ENCODE measurements at regions of chr15 and their contacts with region 1.

Region 1: DNA sequence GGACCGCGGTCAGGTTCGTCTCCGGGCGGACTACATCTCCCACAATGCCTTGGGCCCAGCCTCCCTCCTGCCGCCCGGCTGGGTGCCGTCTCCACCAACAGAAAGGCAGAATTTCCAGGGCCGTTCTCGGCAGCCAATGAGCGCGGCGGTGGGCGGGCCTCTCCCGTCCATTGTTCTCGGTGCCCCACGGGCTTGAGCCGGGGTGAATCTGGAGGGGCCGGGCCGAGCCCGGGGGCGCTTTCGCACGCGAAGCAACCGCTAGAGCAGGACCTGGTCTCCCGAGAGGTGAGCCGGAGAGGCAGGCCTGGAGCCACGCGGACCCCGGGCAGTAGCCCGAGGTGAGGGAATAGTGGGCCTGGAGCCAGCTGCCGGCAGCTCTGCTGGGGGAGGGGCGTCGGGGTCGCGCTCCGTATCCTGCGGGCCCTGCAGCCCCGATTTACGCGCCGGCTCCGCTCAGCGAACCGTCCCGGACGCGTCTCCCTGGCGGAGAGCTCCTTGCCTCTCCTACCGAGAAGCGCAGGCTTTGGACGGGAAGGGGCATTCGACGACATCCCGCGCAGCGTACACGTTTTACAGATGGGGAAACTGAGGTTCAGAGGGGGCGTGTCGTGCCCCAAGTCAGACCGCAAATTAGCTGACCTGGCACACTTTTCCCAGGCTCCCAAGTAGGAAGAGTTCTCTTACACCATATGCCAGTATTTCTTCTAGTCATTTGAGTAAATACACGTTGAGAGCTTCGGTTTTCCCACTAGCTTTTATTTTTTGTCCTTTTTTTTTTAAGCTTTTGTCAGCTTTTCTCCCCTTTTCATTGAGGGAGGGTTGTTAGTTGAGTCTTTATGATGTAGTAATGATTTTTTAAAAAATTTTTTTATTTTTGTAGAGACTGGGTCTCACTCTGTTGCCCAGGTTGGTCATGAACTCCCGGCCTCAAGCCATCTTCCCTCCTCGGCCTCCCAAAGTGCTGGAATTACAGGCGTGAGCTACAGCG is at the start of gene ZSCAN2:
- DNase-seq: peak; percentile 95 to 97
- H3K4me3 ChIP-seq: peak within 1 kb of the TSS; percentile 67
- H3K4me3 Mint-ChIP-seq: peak within 1 kb of the TSS; percentile 96
- H3K27ac Mint-ChIP-seq: peak within 1 kb of the TSS; percentile 86
- H3K4me1 ChIP-seq: peaks cover 12% of the 10 kb centered on the region
- H3K4me1 Mint-ChIP-seq: peaks cover 19% of the 10 kb centered on the region
- H3K27me3 ChIP-seq: no peaks in the 10 kb centered on the region
- H3K27me3 Mint-ChIP-seq: peaks cover 3% of the 10 kb centered on the region
- CTCF ChIP-seq: no peak
- total RNA-seq, gene ZSCAN2: 12.7 and 12.9 TPM in 2 replicates

Region 2: GRCh38 chr15:84552896-84553295 is 48.2 kb before region 1 on chr15:
- CTCF ChIA-PET with region 1: no interaction called
- POLR2A ChIA-PET with region 1: no interaction called
- intact Hi-C with region 1: no loop called
- DNase-seq: no peak
- H3K4me3 ChIP-seq: no peak overlapping the region
- H3K4me3 Mint-ChIP-seq: no peak overlapping the region
- H3K27ac Mint-ChIP-seq: no peak overlapping the region
- H3K4me1 ChIP-seq: no peaks in the 10 kb centered on the region
- H3K4me1 Mint-ChIP-seq: no peaks in the 10 kb centered on the region
- H3K27me3 ChIP-seq: no peaks in the 10 kb centered on the region
- H3K27me3 Mint-ChIP-seq: no peaks in the 10 kb centered on the region
- CTCF ChIP-seq: no peak

Region 3: GRCh38 chr15:84633311-84634227 is 32.4 kb after region 1 on chr15:
- CTCF ChIA-PET with region 1: interaction called, 25 read pairs
- POLR2A ChIA-PET with region 1: interaction called, 5 read pairs
- intact Hi-C with region 1: loop called (anchors 1 kb)
- DNase-seq: peak; percentile 65 to 72
- H3K4me3 ChIP-seq: peak overlapping the region; percentile 70
- H3K4me3 Mint-ChIP-seq: peak overlapping the region; percentile 91
- H3K27ac Mint-ChIP-seq: peak overlapping the region; percentile 74
- H3K4me1 ChIP-seq: 0 out of 2 replicates have a peak, but pooled peaks cover 7% of the 10 kb centered on the region
- H3K4me1 Mint-ChIP-seq: no peaks in the 10 kb centered on the region
- H3K27me3 ChIP-seq: no peaks in the 10 kb centered on the region
- H3K27me3 Mint-ChIP-seq: no peaks in the 10 kb centered on the region
- CTCF ChIP-seq: no peak

Region 4: DNA sequence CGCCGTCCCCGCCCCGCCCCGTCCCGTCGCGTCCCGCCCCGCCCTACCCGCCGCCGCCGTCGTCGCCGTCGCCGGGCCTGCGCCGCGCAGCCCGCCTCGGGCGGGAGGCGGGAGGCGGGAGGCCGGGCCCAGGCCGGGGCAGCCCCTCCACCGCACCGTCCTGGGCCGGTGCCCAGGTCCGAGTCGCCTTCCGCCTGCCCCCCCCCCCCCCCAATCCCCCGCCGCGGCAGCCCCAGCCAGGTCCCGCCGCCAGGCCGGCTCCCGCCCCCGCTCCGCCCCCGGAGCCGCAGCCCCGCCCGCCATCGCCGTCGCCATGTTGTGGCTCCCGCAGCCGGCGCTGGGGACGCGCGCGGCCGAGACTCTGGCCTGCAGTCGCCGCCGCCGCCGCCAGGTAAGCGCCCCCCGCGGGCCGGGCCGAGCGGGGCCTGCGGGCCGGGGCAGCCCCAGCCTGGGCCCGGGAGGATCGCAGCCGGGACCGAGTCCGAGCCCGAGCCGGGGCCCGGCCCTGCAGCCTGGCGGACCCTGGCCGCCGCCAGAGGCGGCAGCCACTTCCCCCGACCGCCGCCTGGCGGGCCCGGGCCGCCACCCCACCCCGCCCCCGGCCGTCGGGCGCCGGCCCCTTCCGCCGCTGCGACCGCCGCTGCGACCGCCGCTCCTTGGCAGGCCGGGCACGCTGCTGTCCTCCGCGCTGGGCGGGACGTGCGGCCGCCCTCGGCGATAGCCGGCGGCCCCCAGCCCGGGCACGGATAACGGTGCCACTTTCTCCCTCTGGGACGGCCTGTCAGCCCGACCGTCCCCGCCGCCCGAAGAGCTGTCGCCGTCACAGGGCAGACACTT is 147.3 kb after region 1 on chr15 and contains the start of gene ZNF592:
- CTCF ChIA-PET with region 1: no interaction called
- POLR2A ChIA-PET with region 1: no interaction called
- intact Hi-C with region 1: no loop called
- DNase-seq: peak; percentile 75 to 87
- H3K4me3 ChIP-seq: peak within 1 kb of the TSS; percentile 89
- H3K4me3 Mint-ChIP-seq: peak within 1 kb of the TSS; percentile 94
- H3K27ac Mint-ChIP-seq: peak within 1 kb of the TSS; percentile 97
- H3K4me1 ChIP-seq: peaks cover 39% of the 10 kb centered on the region
- H3K4me1 Mint-ChIP-seq: peaks cover 34% of the 10 kb centered on the region
- H3K27me3 ChIP-seq: no peaks in the 10 kb centered on the region
- H3K27me3 Mint-ChIP-seq: no peaks in the 10 kb centered on the region
- CTCF ChIP-seq: no peak
- total RNA-seq, gene ZNF592: 29.1 and 30.6 TPM in 2 replicates

Measured in Caco-2 (cell line).